Tibial artery (tissue), 4 donors: ENCODE measurements at regions of chr15 and their contacts with region 1.

Region 1: GRCh38 chr15:66851226-66852071 is 149.4 kb downstream of the SMAD6 start:
- DNase-seq: peak; percentile 88 to 93
- H3K4me3 ChIP-seq: no peak overlapping the region
- H3K27ac ChIP-seq: peak overlapping the region; percentile 80 to 83
- H3K4me1 ChIP-seq: peaks cover 0 to 41% (median 32%) of the 10 kb centered on the region in 4 donors
- H3K27me3 ChIP-seq: no peaks in the 10 kb centered on the region
- CTCF ChIP-seq: peak; percentile 98 to 99

Region 2: GRCh38 chr15:66504563-66505429 is 346.7 kb before region 1 on chr15 and contains the starts of genes RPL4 and ZWILCH:
- intact Hi-C with region 1: loop called (anchors 5 kb)
- DNase-seq: peak; percentile 67 to 86
- H3K4me3 ChIP-seq: peak within 1 kb of the TSS; percentile 77 to 78
- H3K27ac ChIP-seq: peak within 1 kb of the TSS; percentile 88 to 90
- H3K4me1 ChIP-seq: peaks cover 0 to 27% (median 19%) of the 10 kb centered on the region in 4 donors
- H3K27me3 ChIP-seq: no peaks in the 10 kb centered on the region
- CTCF ChIP-seq: no peak

Region 3: DNA sequence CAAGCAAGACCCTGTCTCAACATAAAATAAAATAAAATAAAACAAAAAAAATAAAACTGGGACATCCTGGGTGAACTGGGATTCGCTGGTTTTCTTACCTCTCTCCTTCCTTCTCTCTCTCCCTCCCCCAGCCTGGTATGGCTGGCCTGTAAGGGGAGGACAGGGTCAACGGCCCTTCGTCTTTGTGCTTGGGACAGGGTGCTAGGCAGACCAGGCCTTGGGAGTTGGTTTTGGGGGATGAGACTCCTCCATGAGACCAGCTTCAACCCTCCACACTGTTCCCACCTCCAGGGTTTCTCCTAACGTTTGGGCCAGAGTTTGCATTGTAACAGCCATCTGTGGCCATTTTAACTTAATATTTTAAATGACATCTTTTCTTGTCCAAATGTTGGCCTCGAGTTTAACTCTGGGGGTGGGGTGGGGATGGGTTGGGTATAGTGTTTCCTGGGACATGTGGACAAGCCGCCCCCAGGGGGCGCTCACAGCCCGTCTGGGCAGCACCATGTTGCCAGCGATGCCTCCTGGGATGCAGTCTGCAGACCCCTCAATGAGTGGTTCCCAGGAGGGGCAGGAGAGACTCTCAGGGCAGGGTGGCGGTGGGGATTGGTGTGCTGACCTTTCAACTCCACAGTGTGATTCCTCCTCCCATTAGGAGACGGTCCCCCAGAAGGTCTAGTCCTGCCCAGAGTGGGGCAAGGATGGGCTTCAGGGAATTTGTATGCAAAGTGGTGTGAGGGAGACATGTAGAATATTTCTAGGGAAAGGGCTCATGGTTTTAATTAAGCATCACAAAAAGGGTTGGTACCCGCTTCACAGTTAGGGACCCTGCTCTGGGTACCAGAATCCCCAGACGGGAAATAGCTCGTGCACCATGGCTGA is 247.9 kb before region 1 on chr15:
- intact Hi-C with region 1: loop called (anchors 2 kb)
- DNase-seq: peak; percentile 48 to 74
- H3K4me3 ChIP-seq: no peak overlapping the region
- H3K27ac ChIP-seq: no peak overlapping the region
- H3K4me1 ChIP-seq: no peaks in the 10 kb centered on the region
- H3K27me3 ChIP-seq: no peaks in the 10 kb centered on the region
- CTCF ChIP-seq: peak; percentile 83 to 84

Region 4: DNA sequence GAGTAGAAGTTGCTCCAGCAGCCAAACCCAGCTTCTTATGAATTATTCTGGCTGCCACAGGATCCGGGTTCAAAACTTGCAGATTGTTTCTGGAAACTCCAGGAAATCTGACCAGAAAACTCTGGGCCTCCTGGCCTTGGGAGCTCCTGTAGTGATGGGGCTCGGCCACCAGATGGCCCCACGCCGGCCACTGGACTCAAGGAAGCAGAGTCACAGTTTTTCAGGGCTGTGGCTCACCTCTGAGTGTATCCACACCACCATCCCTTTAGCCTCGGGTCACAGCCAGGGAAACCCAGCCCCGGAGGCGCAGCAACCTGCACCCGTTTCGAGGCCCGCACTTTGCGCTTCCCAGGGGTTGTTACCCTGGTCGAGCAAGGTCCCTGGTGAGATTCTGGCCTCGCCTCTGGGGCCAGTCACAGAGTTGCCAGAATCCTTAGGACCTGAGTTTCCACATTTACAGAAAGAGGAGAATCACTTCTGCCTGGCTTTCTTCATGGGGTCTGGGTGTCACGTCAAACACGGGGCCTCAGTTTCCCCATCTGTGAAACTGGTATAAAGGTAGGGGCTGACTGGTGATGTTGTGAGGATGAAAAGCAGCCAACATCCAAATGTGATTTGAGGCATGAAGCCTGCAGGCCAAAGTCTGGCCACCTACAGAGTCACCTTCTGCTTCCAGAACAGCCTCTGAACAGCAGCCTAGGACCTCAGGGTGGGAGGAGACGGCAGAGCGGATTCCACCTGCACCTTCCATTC is 232.1 kb before region 1 on chr15:
- intact Hi-C with region 1: loop called (anchors 5 kb)
- DNase-seq: peak; percentile 80 to 88
- H3K4me3 ChIP-seq: no peak overlapping the region
- H3K27ac ChIP-seq: peak overlapping the region; percentile 80
- H3K4me1 ChIP-seq: peaks cover 0 to 65% (median 51%) of the 10 kb centered on the region in 4 donors
- H3K27me3 ChIP-seq: no peaks in the 10 kb centered on the region
- CTCF ChIP-seq: peak; percentile 91 to 96

Region 5: GRCh38 chr15:66700802-66701421 is 150.5 kb before region 1 on chr15:
- intact Hi-C with region 1: loop called (anchors 5 kb)
- DNase-seq: peak; percentile 96 to 98
- H3K4me3 ChIP-seq: peak overlapping the region; percentile 78 to 84
- H3K27ac ChIP-seq: peak overlapping the region; percentile 75 to 86
- H3K4me1 ChIP-seq: peaks cover 0 to 25% (median 21%) of the 10 kb centered on the region in 4 donors
- H3K27me3 ChIP-seq: no peaks in the 10 kb centered on the region
- CTCF ChIP-seq: no peak

Region 6: DNA sequence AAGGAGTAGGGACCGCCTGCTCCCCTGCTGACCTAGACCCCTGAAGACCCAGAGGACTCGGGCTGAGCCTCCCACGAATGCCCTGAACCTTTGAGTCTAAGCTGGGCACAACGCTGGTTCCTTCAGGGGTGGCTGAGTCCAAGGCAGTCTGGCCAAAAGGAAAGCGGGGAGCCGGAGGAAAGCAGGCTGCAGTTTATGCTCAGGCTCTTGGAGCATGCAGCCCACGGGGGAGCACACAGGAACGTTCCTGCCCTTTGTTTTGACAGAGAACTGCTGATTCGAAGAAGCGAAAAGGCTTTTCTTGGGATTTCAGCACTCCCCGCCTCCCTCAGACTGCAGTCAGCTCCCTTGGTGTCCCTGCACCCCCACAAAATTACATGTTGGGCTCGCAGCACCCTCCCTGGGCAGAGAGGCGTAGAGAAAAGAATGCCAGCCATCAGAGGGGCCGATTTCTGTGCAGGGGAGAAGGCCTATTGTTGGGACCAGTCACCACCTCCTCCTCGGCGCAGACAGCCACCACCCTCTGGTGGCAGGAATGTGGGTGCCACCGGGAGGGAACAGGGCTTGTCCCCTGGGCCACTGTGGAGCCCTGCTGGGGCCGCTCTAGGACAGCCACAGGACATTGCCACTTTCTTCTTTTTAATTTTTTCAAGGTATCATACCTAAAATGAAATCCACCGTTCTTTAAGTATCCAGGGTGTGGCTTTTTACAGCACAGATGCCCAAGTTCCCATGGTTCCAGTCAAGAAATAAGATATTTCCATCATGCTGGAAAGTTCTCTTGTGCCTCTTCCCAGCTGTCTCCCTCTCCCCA is 77.2 kb before region 1 on chr15:
- intact Hi-C with region 1: loop called (anchors 5 kb)
- DNase-seq: peak; percentile 87 to 95
- H3K4me3 ChIP-seq: no peak overlapping the region
- H3K27ac ChIP-seq: peak overlapping the region; percentile 69 to 77
- H3K4me1 ChIP-seq: peaks cover 5 to 83% (median 29%) of the 10 kb centered on the region in 4 donors
- H3K27me3 ChIP-seq: no peaks in the 10 kb centered on the region
- CTCF ChIP-seq: peak; percentile 98 to 99

Region 7: GRCh38 chr15:66803182-66803729 is 48.2 kb before region 1 on chr15:
- intact Hi-C with region 1: loop called (anchors 5 kb)
- DNase-seq: peak; percentile 82 to 94
- H3K4me3 ChIP-seq: no peak overlapping the region
- H3K27ac ChIP-seq: peak overlapping the region; percentile 66 to 82
- H3K4me1 ChIP-seq: peaks cover 6 to 32% (median 25%) of the 10 kb centered on the region in 4 donors
- H3K27me3 ChIP-seq: no peaks in the 10 kb centered on the region
- CTCF ChIP-seq: no peak